Sigmoid colon (tissue), 7 donors: ENCODE measurements at regions of chr5 and their contacts with region 1.

Region 1: DNA sequence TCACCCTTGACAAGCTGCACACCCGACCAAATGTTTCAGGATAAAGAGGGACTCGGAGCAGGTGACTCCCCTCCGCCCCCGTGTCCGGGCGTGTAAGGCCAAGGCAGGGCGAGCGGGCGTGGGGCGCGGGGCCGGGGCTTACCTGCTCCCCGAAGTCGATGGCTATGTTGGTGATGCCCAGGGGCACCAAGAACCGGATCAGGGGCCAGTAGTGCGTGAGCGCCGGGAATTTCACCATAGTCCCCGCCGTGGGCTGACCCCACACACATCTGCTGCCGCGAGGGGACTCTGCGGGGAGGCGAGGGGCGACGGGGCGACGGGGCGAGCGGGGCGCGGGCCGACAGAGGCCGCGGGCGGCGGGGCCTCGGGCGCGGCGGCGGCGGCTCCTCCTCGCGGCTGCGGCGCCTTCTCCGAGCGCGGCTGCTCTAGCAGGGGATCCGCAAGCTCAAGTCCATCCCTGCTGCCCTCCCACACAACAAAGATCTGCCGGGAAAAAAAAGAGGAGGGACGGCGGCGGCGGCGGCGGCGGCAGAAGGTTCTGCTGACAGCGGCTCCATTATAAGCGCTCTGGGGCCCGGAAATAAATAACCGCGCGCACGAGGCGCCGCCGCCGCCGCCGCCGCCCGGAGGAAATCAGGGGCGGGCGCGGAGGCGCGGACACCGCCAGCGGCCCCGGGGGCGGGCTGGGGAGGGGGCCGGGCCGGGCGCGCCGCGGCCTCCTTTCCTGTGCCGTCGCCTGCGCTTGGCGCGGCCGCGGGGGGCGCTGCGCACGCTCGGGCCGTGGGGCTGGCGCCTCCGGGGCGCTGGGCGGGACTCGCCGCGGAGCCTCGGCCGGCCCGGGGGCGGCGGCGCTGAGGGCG is at the start of gene ANKH:
- DNase-seq: peak; percentile 88
- H3K4me3 ChIP-seq: peak within 1 kb of the TSS; percentile 55 to 91 (median 82)
- H3K27ac ChIP-seq: peak within 1 kb of the TSS; percentile 94 to 95 (median 94)
- H3K4me1 ChIP-seq: peaks cover 0 to 38% (median 7%) of the 10 kb centered on the region in 4 donors
- H3K27me3 ChIP-seq: no peaks in the 10 kb centered on the region
- CTCF ChIP-seq: no peak
- EP300 ChIP-seq: no peak
- POLR2A ChIP-seq: no peak
- total RNA-seq, gene ANKH: 16.4 to 28.2 (median 21.5) TPM

Region 2: DNA sequence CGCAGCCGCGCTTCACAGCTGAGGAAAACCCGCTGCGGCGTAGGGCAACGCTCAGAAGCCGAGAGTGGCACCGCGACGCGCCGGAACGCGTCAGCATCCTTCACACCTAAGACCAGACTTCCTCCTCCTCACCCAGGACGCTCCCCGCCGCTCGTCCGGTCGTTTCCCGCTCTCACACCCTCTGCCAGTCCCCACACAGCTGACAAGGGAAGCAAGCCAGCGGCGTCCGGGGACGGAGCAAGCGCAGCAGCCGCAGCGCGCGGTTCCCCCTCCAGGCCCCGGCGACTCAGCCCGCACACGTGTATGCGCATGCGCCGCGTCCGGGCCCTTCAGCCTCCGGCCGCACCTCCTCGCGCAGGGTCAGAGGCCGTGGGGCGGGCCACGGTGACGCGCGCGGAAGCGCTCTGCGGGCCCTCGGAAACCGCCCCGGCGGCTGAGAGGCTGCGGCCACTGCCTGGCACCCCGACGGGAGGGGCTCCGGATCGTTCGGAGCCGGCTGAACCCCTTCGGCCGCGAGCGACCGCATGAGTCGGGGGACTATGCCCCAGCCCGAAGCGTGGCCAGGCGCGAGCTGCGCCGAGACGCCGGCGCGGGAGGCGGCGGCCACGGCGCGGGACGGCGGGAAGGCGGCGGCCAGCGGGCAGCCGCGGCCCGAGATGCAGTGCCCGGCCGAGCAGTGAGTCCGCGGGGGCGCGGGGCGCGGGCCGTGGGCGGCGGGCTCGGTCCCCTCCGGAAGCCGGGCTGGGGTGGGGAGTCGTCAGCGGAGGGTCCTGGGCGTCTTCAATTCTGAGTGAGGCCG is 206.9 kb before region 1 on chr5 and contains the start of gene OTULIN:
- intact Hi-C with region 1: loop called (anchors 5 kb)
- DNase-seq: peak; percentile 95
- H3K4me3 ChIP-seq: peak within 1 kb of the TSS; percentile 61 to 79 (median 69)
- H3K27ac ChIP-seq: peak within 1 kb of the TSS; percentile 85 to 95 (median 92)
- H3K4me1 ChIP-seq: peaks cover 0 to 40% (median 33%) of the 10 kb centered on the region in 4 donors
- H3K27me3 ChIP-seq: no peaks in the 10 kb centered on the region
- CTCF ChIP-seq: no peak
- EP300 ChIP-seq: peak in 1 of 4 donors; percentile 8
- POLR2A ChIP-seq: peak; percentile 62 to 79
- total RNA-seq, gene OTULIN: 12.9 to 37.9 (median 19.8) TPM

Region 3: GRCh38 chr5:14727428-14727865 is 144.0 kb before region 1 on chr5:
- intact Hi-C with region 1: loop called (anchors 2 kb)
- DNase-seq: peak; percentile 86
- H3K4me3 ChIP-seq: no peak overlapping the region
- H3K27ac ChIP-seq: no peak overlapping the region
- H3K4me1 ChIP-seq: peaks cover 0 to 18% (median 7%) of the 10 kb centered on the region in 4 donors
- H3K27me3 ChIP-seq: no peaks in the 10 kb centered on the region
- CTCF ChIP-seq: peak; percentile 62 to 94 (median 88)
- EP300 ChIP-seq: no peak
- POLR2A ChIP-seq: no peak

Region 4: DNA sequence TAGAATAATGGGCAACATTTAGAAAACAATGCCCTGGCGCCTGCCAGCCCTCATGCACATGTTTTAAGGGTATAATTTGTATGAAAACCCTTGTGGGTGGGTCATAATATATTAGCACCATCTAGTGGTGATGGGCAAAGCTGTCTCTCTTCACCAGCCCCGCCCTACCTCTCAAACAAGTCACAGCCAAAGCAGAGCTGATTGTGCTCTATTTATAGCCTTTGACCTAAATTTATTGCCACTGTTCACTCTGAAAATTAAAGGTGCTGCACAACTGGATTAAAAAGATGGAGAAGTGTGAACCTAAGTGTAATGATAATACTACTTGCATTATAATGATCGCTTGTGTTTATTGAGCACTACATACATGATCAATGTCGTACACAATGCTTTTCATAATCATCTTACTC is 132.1 kb after region 1 on chr5:
- intact Hi-C with region 1: loop called (anchors 2 kb)
- DNase-seq: peak; percentile 72
- H3K4me3 ChIP-seq: no peak overlapping the region
- H3K27ac ChIP-seq: no peak overlapping the region
- H3K4me1 ChIP-seq: peaks cover 0 to 17% (median 8%) of the 10 kb centered on the region in 4 donors
- H3K27me3 ChIP-seq: no peaks in the 10 kb centered on the region
- CTCF ChIP-seq: peak in 3 of 4 experiments; percentile 65 to 76 (median 68)
- EP300 ChIP-seq: no peak
- POLR2A ChIP-seq: no peak

Region 5: DNA sequence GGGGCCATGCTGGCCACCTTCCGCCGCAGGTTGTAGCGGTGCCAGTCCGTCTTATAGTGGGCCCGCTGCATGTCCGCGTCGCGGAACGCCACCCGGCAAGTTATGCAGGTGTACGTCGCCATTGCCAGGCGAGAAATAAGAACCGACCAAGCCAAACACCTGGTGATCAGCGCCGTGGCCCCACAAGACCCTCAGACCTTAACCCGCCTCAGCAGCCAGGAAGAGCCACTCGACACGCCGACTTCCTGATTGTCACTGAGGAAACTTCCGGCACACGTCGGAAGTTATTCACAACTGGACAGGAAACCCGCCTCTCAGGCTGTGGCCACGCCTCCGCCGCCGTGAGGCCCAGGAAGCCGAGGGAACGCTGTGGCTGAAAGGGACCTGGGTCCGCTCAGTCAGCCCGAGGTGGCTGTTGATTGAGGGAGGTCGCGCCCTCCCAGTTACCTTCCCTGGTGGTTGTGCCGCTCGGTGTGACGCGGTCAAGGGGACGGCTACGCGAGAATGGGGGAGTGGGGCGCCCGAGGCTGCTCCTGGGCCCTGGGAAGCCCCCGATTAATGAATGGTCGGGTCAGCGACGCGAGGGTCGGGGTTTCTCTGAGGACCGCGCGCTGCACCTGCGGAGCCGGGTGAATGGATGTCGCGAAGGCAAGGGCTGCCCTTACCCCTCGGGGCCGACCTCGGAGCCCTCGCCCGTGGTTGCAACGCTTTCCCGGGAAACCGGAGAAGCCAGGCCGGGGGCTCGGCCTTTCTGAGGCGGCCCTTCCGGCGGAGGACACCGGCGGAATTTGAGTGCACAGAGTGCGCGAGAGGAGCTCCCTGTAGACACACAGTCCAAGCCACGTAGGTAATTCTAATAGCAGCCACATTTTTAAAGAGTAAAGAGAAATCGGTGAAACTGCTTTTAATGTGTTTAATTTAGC is 1594.4 kb after region 1 on chr5 and contains the start of gene ZNF622:
- intact Hi-C with region 1: loop called (anchors 5 kb)
- DNase-seq: peak; percentile 93
- H3K4me3 ChIP-seq: peak within 1 kb of the TSS; percentile 71 to 93 (median 80)
- H3K27ac ChIP-seq: peak within 1 kb of the TSS; percentile 78 to 85 (median 85)
- H3K4me1 ChIP-seq: peaks cover 0 to 64% (median 47%) of the 10 kb centered on the region in 4 donors
- H3K27me3 ChIP-seq: no peaks in the 10 kb centered on the region
- CTCF ChIP-seq: no peak
- EP300 ChIP-seq: peak in 1 of 4 donors; percentile 1
- POLR2A ChIP-seq: peak; percentile 62 to 82
- total RNA-seq, gene ZNF622: 22.8 to 27.8 (median 25.2) TPM